PC-3 (cell line): ENCODE measurements at regions of chr13 and their contacts with region 1.

Region 1: DNA sequence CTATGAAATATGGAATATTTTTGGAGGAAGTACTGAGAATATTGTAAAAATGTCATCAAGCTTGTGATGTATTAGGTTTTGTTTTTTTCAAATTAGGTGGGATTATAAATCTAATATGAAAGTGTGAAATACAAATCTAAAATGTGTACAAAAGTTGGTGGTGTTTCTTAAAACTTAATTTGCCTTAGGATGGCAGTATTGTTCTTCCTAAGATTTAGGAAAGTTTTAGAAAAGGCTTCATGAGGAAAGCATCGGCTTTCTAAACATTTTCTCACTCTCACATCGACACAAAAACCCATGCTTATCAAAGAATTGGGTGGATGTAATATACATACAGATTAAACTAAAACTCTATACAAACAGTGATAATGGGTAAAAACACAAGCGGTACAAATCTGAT is 972.0 kb upstream of the PCDH20 start:
- DNase-seq: peak; percentile 29
- ATAC-seq: no peak; the same call in 1 of the 2 replicates
- H3K4me3 ChIP-seq: no peak overlapping the region
- H3K27ac ChIP-seq: no peak overlapping the region
- H3K4me1 ChIP-seq: no peaks in the 10 kb centered on the region
- H3K27me3 ChIP-seq: no peaks in the 10 kb centered on the region
- CTCF ChIP-seq: peak; percentile 46; the same call in 1 of the 2 replicates

Region 2: GRCh38 chr13:61994174-61994573 is 393.5 kb before region 1 on chr13:
- CTCF ChIA-PET with region 1: no interaction called
- POLR2A ChIA-PET with region 1: no interaction called
- intact Hi-C with region 1: no loop called
- DNase-seq: no peak
- ATAC-seq: no peak
- H3K4me3 ChIP-seq: no peak overlapping the region
- H3K27ac ChIP-seq: no peak overlapping the region
- H3K4me1 ChIP-seq: no peaks in the 10 kb centered on the region
- H3K27me3 ChIP-seq: no peaks in the 10 kb centered on the region
- CTCF ChIP-seq: no peak

Region 3: GRCh38 chr13:62502588-62502987 is 114.9 kb after region 1 on chr13:
- CTCF ChIA-PET with region 1: no interaction called
- POLR2A ChIA-PET with region 1: no interaction called
- intact Hi-C with region 1: loop called (anchors 10 kb)
- DNase-seq: no peak
- ATAC-seq: no peak
- H3K4me3 ChIP-seq: no peak overlapping the region
- H3K27ac ChIP-seq: no peak overlapping the region
- H3K4me1 ChIP-seq: no peaks in the 10 kb centered on the region
- H3K27me3 ChIP-seq: no peaks in the 10 kb centered on the region
- CTCF ChIP-seq: no peak

Region 4: GRCh38 chr13:63048653-63049052 is 661.0 kb after region 1 on chr13:
- CTCF ChIA-PET with region 1: no interaction called
- POLR2A ChIA-PET with region 1: no interaction called
- intact Hi-C with region 1: loop called (anchors 10 kb)
- DNase-seq: peak; percentile 12
- ATAC-seq: no peak
- H3K4me3 ChIP-seq: no peak overlapping the region
- H3K27ac ChIP-seq: no peak overlapping the region
- H3K4me1 ChIP-seq: no peaks in the 10 kb centered on the region
- H3K27me3 ChIP-seq: no peaks in the 10 kb centered on the region
- CTCF ChIP-seq: peak; percentile 32; the same call in 1 of the 2 replicates